ENCODE measurements at regions of chr19 and their contacts with region 1.

Region 1: GRCh38 chr19:3984908-3985642 is at the start of gene EEF2:
- DNase-seq: peak; percentile 57 to 76
- H3K4me3 ChIP-seq: peak within 1 kb of the TSS; percentile 91
- H3K27ac ChIP-seq: peak within 1 kb of the TSS; percentile 95
- H3K4me1 ChIP-seq: peaks cover 23% of the 10 kb centered on the region
- H3K27me3 ChIP-seq: no peaks in the 10 kb centered on the region
- CTCF ChIP-seq: no peak
- total RNA-seq, gene EEF2: 1,471 and 1,742 TPM in 2 replicates

Region 2: GRCh38 chr19:3748965-3749364 is 236.1 kb before region 1 on chr19:
- CTCF ChIA-PET with region 1: interaction called, 18 read pairs
- POLR2A ChIA-PET with region 1: no interaction called
- intact Hi-C with region 1: no loop called
- DNase-seq: no peak
- H3K4me3 ChIP-seq: no peak overlapping the region
- H3K27ac ChIP-seq: no peak overlapping the region
- H3K4me1 ChIP-seq: no peaks in the 10 kb centered on the region
- H3K27me3 ChIP-seq: no peaks in the 10 kb centered on the region
- CTCF ChIP-seq: no peak

Region 3: GRCh38 chr19:3907626-3908265 is 77.3 kb before region 1 on chr19:
- CTCF ChIA-PET with region 1: no interaction called
- POLR2A ChIA-PET with region 1: no interaction called
- intact Hi-C with region 1: no loop called
- DNase-seq: no peak
- H3K4me3 ChIP-seq: no peak overlapping the region
- H3K27ac ChIP-seq: no peak overlapping the region
- H3K4me1 ChIP-seq: no peaks in the 10 kb centered on the region
- H3K27me3 ChIP-seq: peaks cover 29% of the 10 kb centered on the region
- CTCF ChIP-seq: no peak

Region 4: GRCh38 chr19:3970808-3971598 is 14.1 kb before region 1 on chr19 and contains the start of gene DAPK3:
- CTCF ChIA-PET with region 1: interaction called, 12 read pairs
- POLR2A ChIA-PET with region 1: interaction called, 40 read pairs
- intact Hi-C with region 1: loop called (anchors 2 kb)
- DNase-seq: peak; percentile 89 to 95
- H3K4me3 ChIP-seq: peak within 1 kb of the TSS; percentile 81
- H3K27ac ChIP-seq: peak within 1 kb of the TSS; percentile 90
- H3K4me1 ChIP-seq: peaks cover 20% of the 10 kb centered on the region
- H3K27me3 ChIP-seq: no peaks in the 10 kb centered on the region
- CTCF ChIP-seq: no peak
- total RNA-seq, gene DAPK3: 38.1 and 46.5 TPM in 2 replicates

Region 5: DNA sequence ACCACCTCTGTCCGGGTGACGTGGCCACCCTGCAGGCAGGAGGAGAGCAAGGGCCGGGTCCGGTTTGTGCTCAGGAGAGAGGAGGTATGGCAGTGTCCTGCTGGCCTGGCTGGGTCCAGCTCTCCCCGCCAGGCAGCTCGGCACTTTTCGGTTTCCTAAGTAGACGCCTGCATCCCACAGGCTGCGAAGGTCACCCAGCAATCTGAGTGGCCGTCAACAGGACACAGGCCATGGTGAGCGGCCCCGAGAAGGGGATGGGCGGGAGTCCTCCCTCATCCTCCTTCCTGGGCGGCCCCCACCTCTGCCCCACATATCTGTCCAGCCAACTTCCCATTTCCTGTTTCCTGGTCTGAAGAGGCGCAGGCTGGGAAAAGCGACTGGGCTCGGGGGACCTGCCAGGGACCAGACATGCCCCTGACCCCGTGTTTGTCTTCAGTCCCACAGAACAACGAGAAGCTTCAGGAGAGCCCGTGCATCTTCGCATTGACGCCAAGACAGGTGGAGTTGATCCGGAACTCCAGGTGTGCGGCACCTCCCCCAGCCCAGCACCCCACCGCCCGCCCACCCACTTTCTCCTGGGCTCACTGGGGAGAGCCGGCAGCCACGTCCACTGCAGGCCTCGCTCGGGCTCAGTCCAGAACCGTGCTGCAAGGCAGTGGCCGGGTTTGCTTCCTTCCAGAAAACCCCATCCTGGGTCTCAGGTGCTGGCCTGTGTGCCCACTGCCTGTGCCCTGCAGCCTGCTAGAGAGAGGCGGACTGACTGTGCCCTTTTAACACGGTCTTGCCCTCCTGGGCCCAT is 38.7 kb after region 1 on chr19:
- CTCF ChIA-PET with region 1: no interaction called
- POLR2A ChIA-PET with region 1: no interaction called
- intact Hi-C with region 1: no loop called
- DNase-seq: no peak
- H3K4me3 ChIP-seq: no peak overlapping the region
- H3K27ac ChIP-seq: no peak overlapping the region
- H3K4me1 ChIP-seq: no peaks in the 10 kb centered on the region
- H3K27me3 ChIP-seq: no peaks in the 10 kb centered on the region
- CTCF ChIP-seq: no peak

Region 6: GRCh38 chr19:4065430-4066175 is 80.5 kb after region 1 on chr19:
- CTCF ChIA-PET with region 1: interaction called, 4 read pairs
- POLR2A ChIA-PET with region 1: no interaction called
- intact Hi-C with region 1: loop called (anchors 5 kb)
- DNase-seq: peak; percentile 81 to 94
- H3K4me3 ChIP-seq: no peak overlapping the region
- H3K27ac ChIP-seq: no peak overlapping the region
- H3K4me1 ChIP-seq: peaks cover 30% of the 10 kb centered on the region
- H3K27me3 ChIP-seq: no peaks in the 10 kb centered on the region
- CTCF ChIP-seq: no peak

Region 7: GRCh38 chr19:4208385-4209094 is 223.5 kb after region 1 on chr19:
- CTCF ChIA-PET with region 1: interaction called, 4 read pairs
- POLR2A ChIA-PET with region 1: interaction called, 7 read pairs
- intact Hi-C with region 1: loop called (anchors 1 kb)
- DNase-seq: peak; percentile 47 to 74
- H3K4me3 ChIP-seq: 0 out of 2 replicates have a peak overlapping the region, but pooled peaks have one; percentile 16
- H3K27ac ChIP-seq: peak overlapping the region; percentile 81
- H3K4me1 ChIP-seq: peaks cover 9% of the 10 kb centered on the region
- H3K27me3 ChIP-seq: no peaks in the 10 kb centered on the region
- CTCF ChIP-seq: peak; percentile 72